Activated T-helper 2 cell treated with anti-CD3 and anti-CD28 coated beads, Interferon-gamma antibody, Interleukin-2, Interleukin-4, amounts not matched to agents 10 μg/mL and 5 μg/mL and 100 μg/mL, durations not matched to agents 14 hours and 24 hours and 36 hours (primary cell): ENCODE measurements at regions of chr2 and their contacts with region 1.

Region 1: GRCh38 chr2:85611705-85612587 is at the start of gene C2orf68:
- DNase-seq: peak; percentile 85
- H3K4me3 Mint-ChIP-seq: peak within 1 kb of the TSS; percentile 100
- H3K27ac Mint-ChIP-seq: peak within 1 kb of the TSS; percentile 97
- H3K4me1 Mint-ChIP-seq: peaks cover 5% of the 10 kb centered on the region
- H3K27me3 Mint-ChIP-seq: no peaks in the 10 kb centered on the region
- total RNA-seq, gene C2orf68: 34.7 and 35.6 TPM in 2 replicates

Region 2: GRCh38 chr2:85702172-85702571 is 90.2 kb after region 1 on chr2:
- intact Hi-C with region 1: no loop called
- DNase-seq: no peak
- H3K4me3 Mint-ChIP-seq: no peak overlapping the region
- H3K27ac Mint-ChIP-seq: no peak overlapping the region
- H3K4me1 Mint-ChIP-seq: peaks cover 55% of the 10 kb centered on the region
- H3K27me3 Mint-ChIP-seq: peaks cover 13% of the 10 kb centered on the region

Region 3: DNA sequence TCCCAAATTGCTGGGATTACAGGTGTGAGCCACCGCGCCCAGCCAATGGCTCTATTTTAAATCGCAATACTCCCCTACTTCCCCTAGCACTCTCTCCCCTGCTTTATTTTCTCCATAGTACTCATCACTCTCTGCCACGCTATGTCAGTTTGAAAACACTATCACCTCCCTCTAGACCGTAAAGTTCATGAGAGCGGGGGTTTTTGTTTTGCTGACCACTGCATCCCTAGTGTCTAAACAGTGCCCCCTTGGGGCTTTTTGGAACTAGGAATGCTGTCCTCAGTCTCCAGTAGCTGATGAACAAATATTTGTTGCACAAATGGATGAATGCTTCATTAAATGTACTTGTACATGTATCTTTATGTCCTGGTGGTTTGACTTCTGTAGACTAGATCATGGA is 186.0 kb after region 1 on chr2:
- intact Hi-C with region 1: no loop called
- DNase-seq: no peak
- H3K4me3 Mint-ChIP-seq: no peak overlapping the region
- H3K27ac Mint-ChIP-seq: no peak overlapping the region
- H3K4me1 Mint-ChIP-seq: peaks cover 2% of the 10 kb centered on the region
- H3K27me3 Mint-ChIP-seq: peaks cover 15% of the 10 kb centered on the region

Region 4: DNA sequence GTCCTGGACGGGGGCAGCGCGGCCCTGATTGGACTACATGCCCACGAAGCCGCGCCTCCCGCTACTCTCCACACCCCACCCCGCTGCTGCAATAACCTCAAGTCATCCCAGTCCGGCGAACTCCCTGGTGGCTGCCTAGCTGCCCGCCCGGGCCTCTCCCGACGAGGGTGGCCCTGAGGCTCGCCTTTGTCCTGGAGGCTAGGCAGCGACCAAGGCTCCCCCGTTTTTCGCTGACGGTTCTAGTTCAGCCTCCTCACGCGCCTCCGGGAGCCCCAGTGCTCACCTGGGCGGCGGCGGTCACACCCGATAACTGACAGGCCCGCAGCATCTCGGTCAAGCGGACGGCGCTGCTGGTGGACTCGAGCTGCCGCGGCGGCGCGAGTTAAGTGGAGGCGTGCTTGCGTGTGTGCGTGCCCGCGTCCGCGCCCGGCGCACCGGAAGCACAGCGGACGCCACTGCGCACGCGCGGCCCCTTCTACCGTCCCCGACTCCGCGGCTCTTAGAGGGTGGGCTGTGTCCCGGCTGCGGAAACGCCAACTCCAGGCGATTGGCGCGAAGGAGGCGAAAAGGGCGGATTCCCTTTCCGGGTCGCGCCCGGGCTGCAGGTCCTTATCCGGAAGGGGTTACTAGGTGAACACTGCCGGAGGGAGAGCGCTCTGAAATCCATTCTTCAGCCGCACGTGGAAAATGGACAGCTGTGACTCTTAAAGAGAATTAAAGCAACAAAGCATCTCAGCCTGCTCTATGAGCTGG is 583.3 kb after region 1 on chr2 and contains the start of gene IMMT:
- intact Hi-C with region 1: loop called (anchors 10 kb)
- DNase-seq: peak; percentile 91
- H3K4me3 Mint-ChIP-seq: peak within 1 kb of the TSS; percentile 96
- H3K27ac Mint-ChIP-seq: peak within 1 kb of the TSS; percentile 89
- H3K4me1 Mint-ChIP-seq: peaks cover 43% of the 10 kb centered on the region
- H3K27me3 Mint-ChIP-seq: no peaks in the 10 kb centered on the region
- total RNA-seq, gene IMMT: 160 and 180 TPM in 2 replicates

Region 5: GRCh38 chr2:86283411-86284030 is 671.6 kb after region 1 on chr2:
- intact Hi-C with region 1: no loop called
- DNase-seq: no peak
- H3K4me3 Mint-ChIP-seq: no peak overlapping the region
- H3K27ac Mint-ChIP-seq: no peak overlapping the region
- H3K4me1 Mint-ChIP-seq: peaks cover 4% of the 10 kb centered on the region
- H3K27me3 Mint-ChIP-seq: peaks cover 21% of the 10 kb centered on the region